ENCODE measurements at regions of chr1 and their contacts with region 1.

Region 1: GRCh38 chr1:58783993-58784757 is at the start of gene JUN:
- DNase-seq: peak; percentile 100
- H3K4me3 ChIP-seq: peak within 1 kb of the TSS; percentile 82
- H3K27ac ChIP-seq: peak within 1 kb of the TSS; percentile 99
- H3K4me1 ChIP-seq: no peaks in the 10 kb centered on the region
- H3K27me3 ChIP-seq: no peaks in the 10 kb centered on the region
- CTCF ChIP-seq: no peak
- total RNA-seq, gene JUN: 94.1 to 137 TPM

Region 2: GRCh38 chr1:58903514-58904298 is 119.5 kb after region 1 on chr1:
- intact Hi-C with region 1: loop called (anchors 5 kb)
- DNase-seq: peak; percentile 93
- H3K4me3 ChIP-seq: peak overlapping the region; percentile 41
- H3K27ac ChIP-seq: peak overlapping the region; percentile 97
- H3K4me1 ChIP-seq: peaks cover 9% of the 10 kb centered on the region
- H3K27me3 ChIP-seq: no peaks in the 10 kb centered on the region
- CTCF ChIP-seq: no peak

Region 3: GRCh38 chr1:59061876-59062275 is 277.7 kb after region 1 on chr1:
- intact Hi-C with region 1: loop called (anchors 10 kb)
- DNase-seq: peak; percentile 43
- H3K4me3 ChIP-seq: no peak overlapping the region
- H3K27ac ChIP-seq: no peak overlapping the region
- H3K4me1 ChIP-seq: no peaks in the 10 kb centered on the region
- H3K27me3 ChIP-seq: no peaks in the 10 kb centered on the region
- CTCF ChIP-seq: no peak

Region 4: DNA sequence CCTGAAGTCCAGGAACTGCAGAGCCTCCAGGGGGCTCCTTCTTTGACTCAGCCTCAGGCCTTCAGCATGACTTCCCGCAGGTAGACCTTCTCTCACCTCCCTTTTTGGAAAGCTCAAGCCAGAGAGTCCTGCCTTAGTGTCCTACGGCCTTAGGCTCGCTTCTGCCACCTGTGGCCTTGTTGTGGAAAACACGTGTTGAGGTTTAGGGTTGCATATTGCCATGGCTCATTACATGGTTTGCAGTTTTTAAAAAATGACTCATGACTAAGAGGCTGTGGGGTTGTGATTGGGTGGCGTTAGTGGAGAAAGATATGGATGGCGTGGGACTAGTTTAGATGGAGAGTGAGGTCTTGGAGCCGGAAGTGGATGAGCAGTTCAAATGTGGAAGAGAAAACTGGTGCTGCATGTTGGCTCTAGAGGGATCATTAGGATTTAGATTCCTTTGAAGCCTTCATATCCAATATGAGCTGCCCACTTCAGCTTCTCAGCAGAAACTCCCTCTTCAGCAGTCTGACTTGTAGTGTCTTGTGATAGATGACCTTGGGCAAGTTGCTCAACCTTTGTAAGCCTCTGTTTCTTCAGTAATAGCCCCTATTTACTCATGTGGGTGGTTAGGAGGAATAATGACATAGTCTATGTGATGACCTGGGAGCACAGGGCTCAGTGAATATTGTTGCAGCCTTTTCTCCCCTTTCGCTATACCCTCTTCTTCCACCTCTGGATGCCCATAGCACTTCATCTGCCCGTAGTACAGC is 506.2 kb after region 1 on chr1:
- intact Hi-C with region 1: loop called (anchors 5 kb)
- DNase-seq: peak; percentile 41
- H3K4me3 ChIP-seq: no peak overlapping the region
- H3K27ac ChIP-seq: no peak overlapping the region
- H3K4me1 ChIP-seq: no peaks in the 10 kb centered on the region
- H3K27me3 ChIP-seq: no peaks in the 10 kb centered on the region
- CTCF ChIP-seq: peak; percentile 37

Measured in colonic mucosa (tissue), 4 donors.